Heart right ventricle (tissue), 16 donors: ENCODE measurements at regions of chr4 and their contacts with region 1.

Region 1: GRCh38 chr4:158253350-158253980 is 43.2 kb downstream of the TMEM144 start:
- DNase-seq: peak in 1 of 2 donors; percentile 70
- ATAC-seq: peak in 7 of 8 donors; percentile 70 to 83 (median 77)
- H3K4me3 ChIP-seq: no peak overlapping the region
- H3K27ac ChIP-seq: no peak overlapping the region
- H3K4me1 ChIP-seq: peaks cover 0 to 19% (median 4%) of the 10 kb centered on the region in 9 donors
- H3K27me3 ChIP-seq: no peaks in the 10 kb centered on the region
- CTCF ChIP-seq: peak; percentile 13 to 73 (median 64)

Region 2: DNA sequence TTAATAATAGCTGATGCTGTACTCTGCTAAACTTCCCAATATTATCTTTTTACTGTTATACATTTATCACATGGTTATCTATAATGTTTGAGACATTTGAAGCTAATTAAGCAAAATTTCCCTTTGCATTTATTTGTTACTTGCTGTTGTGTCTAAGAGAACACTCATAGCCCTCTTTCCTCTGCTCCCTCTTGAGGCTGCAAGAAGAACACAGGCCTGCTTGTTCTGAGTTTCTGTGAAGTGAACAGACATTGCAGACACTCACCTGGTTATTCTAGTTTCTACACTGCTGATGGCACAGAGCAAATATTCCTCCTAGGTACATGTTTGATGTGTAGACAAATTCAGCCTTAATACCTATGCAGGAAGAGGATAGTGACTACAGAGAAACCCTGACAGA is 448.5 kb before region 1 on chr4:
- intact Hi-C with region 1: no loop called
- DNase-seq: no peak
- ATAC-seq: no peak
- H3K4me3 ChIP-seq: no peak overlapping the region
- H3K27ac ChIP-seq: no peak overlapping the region
- H3K4me1 ChIP-seq: no peaks in the 10 kb centered on the region
- H3K27me3 ChIP-seq: no peaks in the 10 kb centered on the region
- CTCF ChIP-seq: peak in 3 of 9 donors; percentile 11 to 35 (median 14)

Region 3: GRCh38 chr4:157992038-157992705 is 261.3 kb before region 1 on chr4:
- intact Hi-C with region 1: loop called in 6 of 10 experiments (anchors 1 to 10 kb)
- DNase-seq: peak in 1 of 2 donors; percentile 87
- ATAC-seq: peak in 7 of 8 donors; percentile 75 to 94 (median 86)
- H3K4me3 ChIP-seq: peak overlapping the region in 9 of 10 donors; percentile 14 to 54 (median 43)
- H3K27ac ChIP-seq: peak overlapping the region; percentile 42 to 87 (median 74)
- H3K4me1 ChIP-seq: peaks cover 0 to 33% (median 12%) of the 10 kb centered on the region in 9 donors
- H3K27me3 ChIP-seq: no peaks in the 10 kb centered on the region
- CTCF ChIP-seq: peak; percentile 58 to 87 (median 77)

Region 4: GRCh38 chr4:157999743-158000142 is 253.7 kb before region 1 on chr4:
- intact Hi-C with region 1: loop called in 5 of 10 experiments (anchors 2 to 10 kb)
- DNase-seq: no peak
- ATAC-seq: no peak
- H3K4me3 ChIP-seq: no peak overlapping the region
- H3K27ac ChIP-seq: no peak overlapping the region
- H3K4me1 ChIP-seq: peaks cover 0 to 52% (median 23%) of the 10 kb centered on the region in 9 donors
- H3K27me3 ChIP-seq: no peaks in the 10 kb centered on the region
- CTCF ChIP-seq: no peak

Region 5: DNA sequence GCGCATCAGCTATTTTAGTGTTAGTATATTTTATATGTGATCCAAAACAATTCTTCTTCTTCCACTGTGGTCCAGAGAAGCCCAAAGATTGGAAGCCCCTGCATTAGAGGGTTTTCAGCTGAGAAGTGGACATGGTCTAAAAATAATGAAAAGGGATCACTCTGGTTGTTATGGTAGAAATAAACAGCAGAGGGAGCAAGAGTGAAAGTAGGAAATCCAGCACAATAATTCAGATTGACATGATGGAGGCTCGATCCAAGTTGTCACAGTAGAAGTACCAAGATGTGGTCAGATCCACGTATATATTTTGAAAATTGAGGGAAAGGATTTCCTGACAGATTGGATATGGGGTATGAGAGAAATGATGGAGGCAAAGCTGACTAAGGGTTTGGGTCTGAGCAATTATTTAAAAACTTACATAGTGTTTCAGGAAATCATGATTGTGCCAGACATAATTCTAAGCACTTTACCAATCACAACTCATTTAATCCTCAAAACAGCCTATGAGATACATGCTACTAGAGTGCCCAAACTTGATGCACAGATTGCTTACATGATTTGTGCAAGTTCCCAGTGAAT is 60.2 kb before region 1 on chr4:
- intact Hi-C with region 1: loop called (anchors 2 to 10 kb)
- DNase-seq: no peak
- ATAC-seq: peak in 7 of 8 donors; percentile 47 to 79 (median 63)
- H3K4me3 ChIP-seq: no peak overlapping the region
- H3K27ac ChIP-seq: peak overlapping the region in 3 of 10 donors; percentile 5 to 67 (median 33)
- H3K4me1 ChIP-seq: peaks cover 0 to 19% (median 11%) of the 10 kb centered on the region in 9 donors
- H3K27me3 ChIP-seq: no peaks in the 10 kb centered on the region
- CTCF ChIP-seq: peak; percentile 34 to 76 (median 65)

Region 6: GRCh38 chr4:158624889-158625478 is 371.5 kb after region 1 on chr4:
- intact Hi-C with region 1: loop called in 6 of 10 experiments (anchors 2 to 10 kb)
- DNase-seq: peak in 1 of 2 donors; percentile 19
- ATAC-seq: peak in 7 of 8 donors; percentile 46 to 89 (median 80)
- H3K4me3 ChIP-seq: no peak overlapping the region
- H3K27ac ChIP-seq: peak overlapping the region in 3 of 10 donors; percentile 12 to 61 (median 56)
- H3K4me1 ChIP-seq: peaks cover 0 to 31% (median 6%) of the 10 kb centered on the region in 9 donors
- H3K27me3 ChIP-seq: no peaks in the 10 kb centered on the region
- CTCF ChIP-seq: peak; percentile 43 to 80 (median 72)